ENCODE measurements at regions of chr16 and their contacts with region 1.

Region 1: DNA sequence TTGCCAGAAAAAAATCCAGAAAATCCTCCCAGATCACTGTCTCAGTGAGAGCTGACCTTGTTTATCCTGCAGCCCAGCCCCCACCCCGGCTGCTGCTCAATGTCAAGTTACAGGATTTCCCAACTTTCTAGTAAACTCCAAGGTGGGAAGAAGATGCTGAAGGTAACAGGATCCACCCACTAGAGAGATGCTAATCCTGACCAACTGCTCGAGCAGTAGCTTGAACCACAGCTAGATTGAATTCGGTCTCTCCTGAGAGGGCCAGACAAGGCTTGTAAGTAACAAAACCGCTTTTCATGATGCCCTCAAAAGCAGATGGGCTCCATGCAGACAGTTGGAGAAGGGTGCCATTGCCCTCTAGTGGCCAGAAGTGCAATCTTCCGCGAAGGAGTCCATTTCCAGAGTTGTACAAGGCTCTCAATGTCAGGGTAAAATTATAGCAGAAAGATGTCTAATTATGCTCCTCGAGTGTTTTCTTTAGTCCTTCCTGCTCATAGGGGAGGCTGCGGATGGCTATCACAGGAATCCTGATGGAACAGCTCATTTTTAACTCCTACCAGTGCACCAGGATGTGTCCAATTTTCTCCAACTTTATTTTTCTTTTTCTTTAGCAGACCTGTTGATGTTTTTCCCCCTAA is 3.9 kb downstream of the CDH11 start:
- DNase-seq: peak in 4 of 5 donors; percentile 61 to 72 (median 66)
- ATAC-seq: peak; percentile 63 to 67 (median 66)
- H3K4me3 ChIP-seq: peak overlapping the region in 2 of 12 donors; percentile 11 to 24
- H3K27ac ChIP-seq: peak overlapping the region in 2 of 12 donors; percentile 17 to 53
- H3K4me1 ChIP-seq: peaks cover 0 to 40% (median 5%) of the 10 kb centered on the region in 12 donors
- H3K27me3 ChIP-seq: peaks cover 0 to 25% (median 0%) of the 10 kb centered on the region in 9 donors
- CTCF ChIP-seq: peak; percentile 81 to 95 (median 90)
- POLR2A ChIP-seq: no peak

Region 2: DNA sequence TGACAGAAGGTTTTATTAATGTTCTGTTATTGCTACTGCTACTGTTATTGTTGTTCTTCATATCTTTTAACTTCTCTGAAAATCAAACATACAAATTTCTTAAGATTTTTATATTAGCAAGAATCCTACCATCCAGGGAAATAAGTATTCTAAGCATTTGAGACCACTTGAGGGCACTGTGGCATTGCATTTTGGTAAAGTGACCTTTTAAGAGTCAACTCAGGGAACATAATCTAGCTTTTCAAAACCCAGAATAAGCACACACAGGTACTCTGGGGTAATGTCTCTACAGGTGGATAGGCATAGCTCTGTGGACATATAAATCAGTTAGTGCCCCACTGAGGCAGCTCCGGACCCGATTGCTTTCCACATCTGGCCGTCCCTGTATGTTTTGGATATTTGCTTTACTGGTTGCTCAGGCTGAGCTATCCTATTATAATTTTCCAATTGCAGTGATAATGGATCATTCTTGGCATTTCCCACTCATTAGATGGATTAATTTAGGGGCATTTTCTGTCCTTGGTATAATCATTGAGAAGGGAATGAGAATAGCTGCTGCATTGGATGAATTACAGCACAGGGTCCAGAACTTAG is 1656.6 kb before region 1 on chr16:
- intact Hi-C with region 1: loop called in 4 of 10 experiments (anchors 10 kb)
- DNase-seq: no peak
- ATAC-seq: peak in 3 of 4 donors; percentile 5 to 47 (median 45)
- H3K4me3 ChIP-seq: no peak overlapping the region
- H3K27ac ChIP-seq: no peak overlapping the region
- H3K4me1 ChIP-seq: no peaks in the 10 kb centered on the region
- H3K27me3 ChIP-seq: no peaks in the 10 kb centered on the region
- CTCF ChIP-seq: peak in 10 of 12 donors; percentile 13 to 59 (median 48)
- POLR2A ChIP-seq: no peak

Region 3: DNA sequence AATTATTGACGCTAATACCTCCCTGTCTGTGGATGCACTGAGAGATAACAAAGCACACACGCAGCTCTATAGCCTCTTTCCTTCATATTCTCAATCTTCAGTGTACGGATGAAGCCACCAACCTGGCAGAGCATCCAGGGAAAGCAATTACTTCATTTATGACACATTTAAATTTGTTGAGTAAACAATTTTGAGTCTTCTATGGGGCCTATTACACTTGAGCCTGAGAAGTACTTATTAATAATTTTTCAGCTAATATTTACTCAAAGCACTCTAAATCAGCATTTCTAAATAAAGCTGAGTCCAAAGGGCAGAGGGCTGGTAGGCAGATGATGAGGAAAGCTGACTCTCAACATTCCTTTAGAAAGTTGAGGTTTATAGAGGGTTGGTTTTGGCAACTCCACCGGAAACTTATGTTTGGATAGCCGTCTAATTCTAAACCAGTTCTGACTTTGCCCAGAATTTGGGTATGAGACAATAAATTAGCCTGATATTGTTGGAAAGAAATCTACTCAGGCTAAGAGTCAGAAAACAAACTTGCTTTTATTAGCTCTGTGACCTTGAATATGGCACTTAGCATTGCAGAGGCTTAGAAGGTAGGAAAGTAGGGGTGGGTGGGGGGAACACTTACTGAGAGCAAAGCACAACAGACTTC is 639.6 kb before region 1 on chr16:
- intact Hi-C with region 1: loop called in 2 of 10 experiments (anchors 5 to 10 kb)
- DNase-seq: no peak
- ATAC-seq: peak in 3 of 4 donors; percentile 5 to 33 (median 25)
- H3K4me3 ChIP-seq: no peak overlapping the region
- H3K27ac ChIP-seq: peak overlapping the region in 1 of 12 donors; percentile 24
- H3K4me1 ChIP-seq: peaks cover 0 to 23% (median 5%) of the 10 kb centered on the region in 12 donors
- H3K27me3 ChIP-seq: no peaks in the 10 kb centered on the region
- CTCF ChIP-seq: no peak
- POLR2A ChIP-seq: no peak

Region 4: DNA sequence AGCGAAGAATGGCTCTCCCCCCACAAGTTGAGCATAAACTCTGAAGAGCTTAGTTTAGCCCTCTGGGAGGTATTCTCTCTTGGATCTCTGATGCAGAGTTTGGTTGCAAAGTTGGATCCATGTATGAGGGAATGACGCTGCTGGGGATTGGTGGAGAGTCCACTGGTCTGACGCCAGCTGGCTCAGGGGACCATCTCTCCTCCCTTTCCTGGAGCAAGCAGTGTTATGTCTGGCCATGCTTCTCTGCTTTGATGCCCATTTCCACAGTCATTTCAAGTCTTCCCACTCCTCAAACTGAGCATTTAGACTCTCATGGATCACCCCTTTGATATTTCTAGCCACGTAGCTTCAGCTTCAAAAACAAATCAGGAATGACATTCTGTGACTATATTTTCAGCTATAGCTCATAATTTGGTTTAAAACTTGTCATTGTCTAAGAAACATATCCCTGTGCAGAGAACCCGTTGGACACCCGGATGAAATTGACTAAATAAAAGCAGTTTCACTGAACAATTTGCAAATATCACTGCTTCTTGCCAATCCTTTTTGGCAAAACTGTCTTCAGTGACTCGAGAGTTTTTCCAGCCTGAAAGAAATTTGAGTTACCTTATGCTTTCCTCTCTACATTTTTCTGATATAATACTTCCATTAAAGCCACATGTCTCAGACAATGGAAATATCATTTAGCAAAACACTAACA is 197.3 kb after region 1 on chr16:
- intact Hi-C with region 1: loop called in 1 of 10 experiments (anchors 10 kb)
- DNase-seq: peak; percentile 65 to 73 (median 70)
- ATAC-seq: peak in 3 of 4 donors; percentile 78 to 85 (median 85)
- H3K4me3 ChIP-seq: no peak overlapping the region
- H3K27ac ChIP-seq: peak overlapping the region in 2 of 12 donors; percentile 6 to 22
- H3K4me1 ChIP-seq: peaks cover 0 to 21% (median 0%) of the 10 kb centered on the region in 12 donors
- H3K27me3 ChIP-seq: no peaks in the 10 kb centered on the region
- CTCF ChIP-seq: no peak
- POLR2A ChIP-seq: no peak

Region 5: DNA sequence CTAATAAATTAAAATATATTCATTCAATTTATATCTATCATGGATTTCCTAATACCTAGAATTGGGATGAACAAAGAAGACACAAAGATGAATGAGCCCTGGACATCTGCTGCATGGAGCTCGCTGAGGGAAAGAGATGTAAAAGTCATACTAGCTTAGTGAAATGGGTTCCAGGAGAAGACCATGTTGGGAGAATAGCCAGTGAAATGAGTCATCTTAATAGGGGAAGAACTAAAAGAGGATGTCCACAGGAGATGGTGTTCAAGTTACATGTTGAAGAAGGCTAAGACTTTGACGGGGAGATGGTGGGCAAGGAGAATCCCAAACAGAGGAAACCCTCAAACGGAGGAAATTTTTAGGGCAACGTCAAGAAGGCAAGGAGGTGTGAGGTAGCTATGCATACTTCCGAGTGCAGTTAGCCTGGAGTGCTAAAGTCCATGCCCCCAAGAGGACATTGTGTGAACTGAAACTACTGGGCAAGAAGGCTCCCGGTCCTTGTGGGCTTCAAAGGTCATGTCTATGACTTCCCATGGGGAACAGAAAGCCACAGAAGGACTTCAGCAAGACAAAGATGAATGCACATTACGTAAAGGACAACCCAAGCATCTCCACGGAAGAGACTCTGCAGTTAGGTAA is 224.4 kb after region 1 on chr16:
- intact Hi-C with region 1: no loop called
- DNase-seq: no peak
- ATAC-seq: no peak
- H3K4me3 ChIP-seq: no peak overlapping the region
- H3K27ac ChIP-seq: no peak overlapping the region
- H3K4me1 ChIP-seq: no peaks in the 10 kb centered on the region
- H3K27me3 ChIP-seq: no peaks in the 10 kb centered on the region
- CTCF ChIP-seq: no peak
- POLR2A ChIP-seq: no peak